Activated CD8-positive, alpha-beta T cell treated with anti-CD3 and anti-CD28 coated beads for 36 hours (primary cell): ENCODE measurements at regions of chr2 and their contacts with region 1.

Region 1: GRCh38 chr2:30106543-30106942 is 40.3 kb upstream of the YPEL5 start:
- DNase-seq: no peak
- ATAC-seq: no peak
- H3K4me3 Mint-ChIP-seq: no peak overlapping the region
- H3K27ac Mint-ChIP-seq: no peak overlapping the region
- H3K4me1 Mint-ChIP-seq: no peaks in the 10 kb centered on the region
- H3K27me3 Mint-ChIP-seq: peaks cover 2% of the 10 kb centered on the region
- CTCF ChIP-seq: no peak

Region 2: GRCh38 chr2:30078521-30078920 is 28.0 kb before region 1 on chr2:
- CTCF ChIA-PET with region 1: no interaction called
- POLR2A ChIA-PET with region 1: no interaction called
- intact Hi-C with region 1: no loop called
- DNase-seq: no peak
- ATAC-seq: no peak
- H3K4me3 Mint-ChIP-seq: no peak overlapping the region
- H3K27ac Mint-ChIP-seq: no peak overlapping the region
- H3K4me1 Mint-ChIP-seq: no peaks in the 10 kb centered on the region
- H3K27me3 Mint-ChIP-seq: peaks cover 6% of the 10 kb centered on the region
- CTCF ChIP-seq: no peak

Region 3: GRCh38 chr2:30089171-30089570 is 17.4 kb before region 1 on chr2:
- CTCF ChIA-PET with region 1: interaction called, 10 read pairs
- POLR2A ChIA-PET with region 1: no interaction called
- intact Hi-C with region 1: no loop called
- DNase-seq: no peak
- ATAC-seq: no peak
- H3K4me3 Mint-ChIP-seq: no peak overlapping the region
- H3K27ac Mint-ChIP-seq: no peak overlapping the region
- H3K4me1 Mint-ChIP-seq: no peaks in the 10 kb centered on the region
- H3K27me3 Mint-ChIP-seq: peaks cover 24% of the 10 kb centered on the region
- CTCF ChIP-seq: no peak

Region 4: DNA sequence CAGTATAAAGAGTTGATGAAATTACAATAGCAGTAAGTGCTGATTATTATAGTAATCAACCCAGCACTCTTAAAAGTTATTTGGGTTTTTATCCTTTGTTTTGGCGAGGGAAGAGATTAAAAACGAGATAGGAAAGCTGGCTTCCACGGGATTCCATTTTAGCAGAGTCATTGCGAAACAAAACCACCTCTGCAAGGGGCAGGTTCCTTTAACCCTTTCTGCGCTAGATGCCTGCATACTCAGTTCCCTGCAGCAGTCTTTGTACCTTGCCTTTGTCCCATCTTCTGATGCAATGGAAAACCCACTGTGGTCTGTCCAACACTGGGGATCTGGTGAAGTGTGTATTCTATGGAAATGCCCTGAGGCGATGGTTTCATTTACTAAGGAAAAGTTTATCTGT is 43.0 kb after region 1 on chr2:
- CTCF ChIA-PET with region 1: no interaction called
- POLR2A ChIA-PET with region 1: no interaction called
- intact Hi-C with region 1: no loop called
- DNase-seq: peak; percentile 32
- ATAC-seq: no peak
- H3K4me3 Mint-ChIP-seq: peak overlapping the region; percentile 78
- H3K27ac Mint-ChIP-seq: peak overlapping the region; percentile 67
- H3K4me1 Mint-ChIP-seq: peaks cover 66% of the 10 kb centered on the region
- H3K27me3 Mint-ChIP-seq: no peaks in the 10 kb centered on the region
- CTCF ChIP-seq: no peak